T-cell (primary cell): ENCODE measurements at regions of chr12 and their contacts with region 1.

Region 1: DNA sequence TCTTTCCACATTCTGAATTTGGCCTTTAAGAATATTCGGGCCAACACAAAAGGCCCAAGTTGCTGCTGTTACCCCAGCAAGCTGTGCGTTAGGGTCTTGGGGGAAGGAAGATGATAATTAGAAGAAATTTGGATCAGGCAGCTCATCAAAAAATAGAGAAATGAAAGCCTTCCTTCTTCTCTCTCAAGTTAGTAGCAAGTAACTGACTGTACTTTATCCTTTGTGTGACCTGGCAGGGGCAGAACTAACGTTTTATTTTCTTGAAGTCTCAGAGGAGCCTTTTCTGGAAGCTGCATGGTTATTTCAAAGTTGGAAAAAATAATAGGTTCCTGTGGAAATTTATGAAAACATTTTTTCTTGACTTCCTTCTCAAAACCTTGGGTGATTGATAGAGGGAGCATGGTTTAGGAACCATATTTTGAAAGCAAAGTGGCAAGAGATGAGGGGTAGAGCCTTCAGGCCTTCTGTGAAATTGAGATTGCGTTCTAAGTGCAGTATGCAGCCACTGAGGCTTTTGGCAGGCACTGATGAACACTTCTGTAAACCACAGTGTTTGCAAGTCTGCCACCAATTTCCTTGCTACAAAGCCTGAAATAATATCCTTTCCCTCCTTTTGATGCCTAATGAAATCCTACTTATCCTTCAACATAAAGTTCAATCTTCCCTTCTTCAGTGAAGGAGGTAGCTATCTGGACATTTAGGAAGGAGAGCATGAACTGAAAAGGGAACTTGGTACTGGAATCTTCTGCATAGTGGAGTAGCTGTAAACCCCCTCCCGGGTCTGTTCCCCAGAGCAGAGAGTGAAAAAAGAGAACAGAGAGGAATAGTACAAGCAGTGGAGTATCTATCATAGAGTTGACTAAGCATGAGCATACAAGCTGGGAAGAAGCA is 123.2 kb downstream of the FGD4 start:
- DNase-seq: no peak
- ATAC-seq: no peak
- H3K4me3 ChIP-seq: no peak overlapping the region
- H3K4me3 Mint-ChIP-seq: no peak overlapping the region
- H3K27ac ChIP-seq: no peak overlapping the region
- H3K27ac Mint-ChIP-seq: no peak overlapping the region
- H3K4me1 ChIP-seq: peaks cover 0 to 8% of the 10 kb centered on the region in 2 experiments
- H3K4me1 Mint-ChIP-seq: peaks cover 0 to 9% (median 9%) of the 10 kb centered on the region in 3 donors
- H3K27me3 ChIP-seq: peaks cover 0 to 4% of the 10 kb centered on the region in 2 experiments
- H3K27me3 Mint-ChIP-seq: peaks cover 0 to 2% of the 10 kb centered on the region in 2 donors

Region 2: DNA sequence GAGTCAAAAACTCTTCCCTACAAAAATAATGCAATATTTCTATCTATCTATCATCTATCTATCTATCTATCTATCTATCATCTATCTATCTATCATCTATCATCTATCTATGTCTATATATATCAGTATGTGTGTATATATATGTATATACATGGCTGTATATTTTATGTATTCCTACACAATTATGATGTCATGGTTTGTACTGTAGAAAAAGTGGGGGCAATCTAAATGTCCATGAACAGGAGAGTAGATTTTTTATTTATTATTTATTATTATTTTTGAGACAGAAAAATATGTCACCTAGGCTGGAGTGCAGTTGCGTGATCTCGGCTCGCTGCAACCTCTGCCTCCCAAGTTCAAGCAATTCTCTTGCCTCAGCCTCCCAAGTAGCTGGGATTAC is 461.5 kb before region 1 on chr12:
- CTCF ChIA-PET with region 1: interaction called in 1 of 2 experiments, 11 read pairs
- POLR2A ChIA-PET with region 1: no interaction called
- DNase-seq: no peak
- ATAC-seq: no peak
- H3K4me3 ChIP-seq: no peak overlapping the region
- H3K4me3 Mint-ChIP-seq: no peak overlapping the region
- H3K27ac ChIP-seq: no peak overlapping the region
- H3K27ac Mint-ChIP-seq: no peak overlapping the region
- H3K4me1 ChIP-seq: peaks cover 0 to 4% of the 10 kb centered on the region in 2 experiments
- H3K4me1 Mint-ChIP-seq: peaks cover 0 to 10% (median 9%) of the 10 kb centered on the region in 3 donors
- H3K27me3 ChIP-seq: no peaks in the 10 kb centered on the region
- H3K27me3 Mint-ChIP-seq: no peaks in the 10 kb centered on the region

Region 3: DNA sequence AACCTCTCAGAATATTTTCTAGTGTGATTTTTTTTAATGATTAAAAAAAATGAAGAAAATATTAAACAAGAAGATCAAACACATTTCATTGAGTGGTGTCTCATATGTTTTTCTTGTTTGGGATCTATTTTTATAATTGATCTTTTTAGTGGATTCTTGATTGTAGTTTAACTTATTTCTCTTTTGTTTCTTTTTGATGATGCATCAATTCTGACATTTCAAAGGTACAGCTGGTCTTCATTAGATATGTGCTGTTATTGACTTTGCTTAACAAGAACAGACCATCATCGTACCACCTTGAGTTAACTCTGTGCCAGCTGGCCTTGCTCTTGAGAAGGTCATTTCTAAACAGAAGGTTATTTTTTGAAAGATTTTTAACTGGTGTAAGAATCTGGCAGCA is 169.0 kb before region 1 on chr12:
- CTCF ChIA-PET with region 1: no interaction called
- POLR2A ChIA-PET with region 1: no interaction called
- DNase-seq: no peak
- ATAC-seq: no peak
- H3K4me3 ChIP-seq: no peak overlapping the region
- H3K4me3 Mint-ChIP-seq: no peak overlapping the region
- H3K27ac ChIP-seq: no peak overlapping the region
- H3K27ac Mint-ChIP-seq: no peak overlapping the region
- H3K4me1 ChIP-seq: no peaks in the 10 kb centered on the region
- H3K4me1 Mint-ChIP-seq: no peaks in the 10 kb centered on the region
- H3K27me3 ChIP-seq: no peaks in the 10 kb centered on the region
- H3K27me3 Mint-ChIP-seq: no peaks in the 10 kb centered on the region